Activated T-helper 2 cell treated with anti-CD3 and anti-CD28 coated beads, Interferon-gamma antibody, Interleukin-2, Interleukin-4, amounts not matched to agents 10 μg/mL and 5 μg/mL and 100 μg/mL, durations not matched to agents 14 hours and 24 hours and 36 hours (primary cell): ENCODE measurements at regions of chr9 and their contacts with region 1.

Region 1: GRCh38 chr9:21761309-21761901 is 41.0 kb upstream of the MTAP start:
- DNase-seq: peak; percentile 29
- H3K4me3 Mint-ChIP-seq: no peak overlapping the region
- H3K27ac Mint-ChIP-seq: no peak overlapping the region
- H3K4me1 Mint-ChIP-seq: peaks cover 14% of the 10 kb centered on the region
- H3K27me3 Mint-ChIP-seq: peaks cover 69% of the 10 kb centered on the region

Region 2: DNA sequence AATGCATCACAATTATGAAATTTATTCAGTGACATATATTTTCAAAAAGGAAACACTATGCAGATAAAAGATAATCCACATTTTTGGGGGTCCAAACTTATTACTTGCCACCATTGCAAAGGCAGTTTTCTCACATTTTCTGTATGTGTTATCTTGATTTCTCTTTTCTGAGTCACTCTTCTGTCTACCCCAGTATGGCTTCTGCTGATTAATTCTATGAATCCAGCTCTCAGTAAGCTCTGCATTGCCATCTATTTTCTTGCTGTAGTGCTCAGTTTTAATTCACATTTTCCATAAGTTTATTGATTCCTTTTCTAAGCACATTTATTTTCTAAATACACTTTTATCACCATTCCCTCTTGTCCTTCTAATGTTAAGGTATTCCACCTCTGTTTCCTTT is 556.2 kb before region 1 on chr9:
- intact Hi-C with region 1: loop called (anchors 10 kb)
- DNase-seq: no peak
- H3K4me3 Mint-ChIP-seq: no peak overlapping the region
- H3K27ac Mint-ChIP-seq: no peak overlapping the region
- H3K4me1 Mint-ChIP-seq: peaks cover 6% of the 10 kb centered on the region
- H3K27me3 Mint-ChIP-seq: peaks cover 35% of the 10 kb centered on the region

Region 3: GRCh38 chr9:21576331-21577189 is 184.8 kb before region 1 on chr9:
- intact Hi-C with region 1: loop called (anchors 5 kb)
- DNase-seq: no peak
- H3K4me3 Mint-ChIP-seq: no peak overlapping the region
- H3K27ac Mint-ChIP-seq: no peak overlapping the region
- H3K4me1 Mint-ChIP-seq: peaks cover 31% of the 10 kb centered on the region
- H3K27me3 Mint-ChIP-seq: peaks cover 19% of the 10 kb centered on the region

Region 4: DNA sequence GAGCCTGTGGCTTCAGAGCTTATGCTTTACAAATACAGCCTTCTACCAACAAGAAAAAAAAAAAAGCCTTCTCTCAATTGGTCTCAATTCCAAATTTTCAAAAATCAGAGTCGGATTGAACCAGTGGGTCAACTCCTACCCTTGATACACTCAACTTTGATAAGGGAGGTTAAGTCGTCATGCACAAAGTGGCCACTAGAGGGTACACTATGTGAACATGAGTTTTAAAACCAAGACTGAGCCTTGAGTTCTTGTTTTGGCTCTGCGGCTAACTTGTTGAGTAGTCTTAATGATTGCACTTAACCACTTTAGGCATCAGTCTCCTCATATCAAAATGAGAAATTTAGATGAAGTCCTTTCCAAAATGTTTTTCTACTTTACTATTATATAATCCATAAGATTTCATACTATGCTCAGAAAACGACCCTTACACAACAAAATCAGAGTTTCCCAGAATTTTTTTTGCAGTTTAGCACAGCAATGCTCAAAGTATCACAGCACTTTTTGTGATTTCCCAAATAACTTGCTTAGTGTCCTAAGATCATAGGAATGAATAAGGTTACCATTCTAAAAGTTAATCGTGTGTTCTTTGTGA is 51.8 kb before region 1 on chr9:
- intact Hi-C with region 1: loop called (anchors 1 kb)
- DNase-seq: peak; percentile 41
- H3K4me3 Mint-ChIP-seq: no peak overlapping the region
- H3K27ac Mint-ChIP-seq: no peak overlapping the region
- H3K4me1 Mint-ChIP-seq: peaks cover 4% of the 10 kb centered on the region
- H3K27me3 Mint-ChIP-seq: peaks cover 24% of the 10 kb centered on the region

Region 5: DNA sequence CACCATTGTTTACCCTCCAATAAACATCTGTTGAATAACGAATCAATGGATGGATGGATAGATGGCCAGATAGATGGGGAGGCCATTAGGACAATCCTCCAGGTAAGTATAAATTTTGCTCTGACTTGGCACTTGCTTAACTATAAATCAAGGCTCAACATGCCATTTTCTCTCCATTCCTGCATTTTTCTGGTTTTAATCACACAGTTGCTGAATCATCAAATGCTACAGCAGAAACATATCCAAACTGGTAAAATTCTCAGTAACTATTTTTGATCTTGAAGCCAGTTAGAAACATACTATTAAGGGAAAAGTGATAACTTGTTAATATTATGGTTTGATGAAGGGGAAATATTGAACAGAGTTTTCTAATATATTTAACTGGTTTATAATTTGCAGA is 30.5 kb before region 1 on chr9:
- intact Hi-C with region 1: no loop called
- DNase-seq: no peak
- H3K4me3 Mint-ChIP-seq: no peak overlapping the region
- H3K27ac Mint-ChIP-seq: no peak overlapping the region
- H3K4me1 Mint-ChIP-seq: no peaks in the 10 kb centered on the region
- H3K27me3 Mint-ChIP-seq: peaks cover 9% of the 10 kb centered on the region

Region 6: DNA sequence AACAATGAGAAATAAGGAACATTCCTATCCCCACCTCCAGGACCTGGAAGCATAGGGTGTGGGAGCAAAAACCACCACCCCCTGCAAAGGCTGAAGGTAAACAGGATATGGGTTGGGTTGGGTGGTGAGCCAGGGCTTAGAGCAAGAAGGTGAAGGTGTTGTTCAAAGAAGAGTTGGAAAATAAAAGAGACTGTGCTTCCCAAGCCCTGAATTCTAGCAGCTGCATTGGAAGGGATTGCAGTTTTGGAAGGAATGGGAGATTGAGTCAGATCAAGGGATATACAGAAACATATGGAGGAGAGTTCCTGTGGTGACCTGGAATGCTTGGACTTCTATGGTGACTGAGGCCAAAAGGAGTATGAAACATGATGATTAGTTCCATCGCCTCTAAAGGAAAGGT is 16.3 kb after region 1 on chr9:
- intact Hi-C with region 1: loop called (anchors 2 kb)
- DNase-seq: no peak
- H3K4me3 Mint-ChIP-seq: no peak overlapping the region
- H3K27ac Mint-ChIP-seq: no peak overlapping the region
- H3K4me1 Mint-ChIP-seq: no peaks in the 10 kb centered on the region
- H3K27me3 Mint-ChIP-seq: peaks cover 11% of the 10 kb centered on the region

Region 7: GRCh38 chr9:22097697-22098096 is 336.3 kb after region 1 on chr9:
- intact Hi-C with region 1: loop called (anchors 2 kb)
- DNase-seq: no peak
- H3K4me3 Mint-ChIP-seq: no peak overlapping the region
- H3K27ac Mint-ChIP-seq: peak overlapping the region; percentile 44
- H3K4me1 Mint-ChIP-seq: peaks cover 42% of the 10 kb centered on the region
- H3K27me3 Mint-ChIP-seq: peaks cover 42% of the 10 kb centered on the region